ENCODE measurements at regions of chr9 and their contacts with region 1.

Region 1: GRCh38 chr9:131277910-131278701 is 1.8 kb upstream of the FAM78A start:
- DNase-seq: peak; percentile 67
- H3K4me3 Mint-ChIP-seq: peak overlapping the region; percentile 85
- H3K27ac Mint-ChIP-seq: peak overlapping the region; percentile 91
- H3K4me1 Mint-ChIP-seq: peaks cover 19% of the 10 kb centered on the region
- H3K27me3 Mint-ChIP-seq: peaks cover 14% of the 10 kb centered on the region

Region 2: DNA sequence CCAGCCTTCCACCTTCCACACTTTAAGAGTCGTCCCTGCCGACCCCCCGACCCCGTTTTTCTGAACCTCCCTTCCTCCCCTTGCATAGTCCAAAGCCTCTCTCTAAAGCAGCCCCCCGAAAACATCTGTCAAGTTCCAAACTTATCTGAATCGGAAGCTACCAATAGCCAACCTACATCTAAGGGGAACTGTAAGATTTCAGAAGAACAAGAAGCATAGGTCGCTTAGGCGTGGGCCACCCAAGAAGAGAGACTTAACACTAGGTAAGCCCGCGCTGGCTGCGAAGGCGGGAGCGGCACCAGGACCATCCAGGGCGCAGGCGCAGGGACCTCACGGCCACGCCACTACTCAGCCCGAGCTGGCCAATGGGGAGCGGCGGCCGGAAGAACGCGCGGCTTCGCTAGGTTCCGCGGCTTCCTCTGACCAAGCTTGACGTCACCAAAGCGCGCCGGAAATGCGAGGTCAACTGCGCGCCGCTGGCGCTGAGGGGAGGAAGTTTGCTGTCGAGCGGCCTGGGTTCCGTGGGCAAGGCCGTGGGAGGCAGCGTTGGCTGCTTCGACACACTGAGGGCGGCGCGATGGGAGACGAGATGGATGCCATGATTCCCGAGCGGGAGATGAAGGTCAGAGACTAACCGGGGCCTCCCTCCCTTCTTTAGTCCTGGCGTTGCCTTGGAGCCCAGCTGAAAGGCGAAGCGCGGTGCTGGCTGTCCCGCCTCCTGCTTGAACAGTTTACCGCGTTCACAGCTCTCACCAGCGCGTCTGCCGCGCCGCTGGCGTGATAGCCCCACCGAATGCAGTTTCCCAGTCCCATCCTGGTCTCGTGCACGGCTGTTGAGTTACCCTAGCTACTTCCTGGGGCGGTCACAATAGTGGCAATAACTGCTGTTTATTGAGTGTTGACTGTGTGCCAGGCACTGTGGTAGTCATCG is 152.7 kb before region 1 on chr9 and contains the start of gene NUP214:
- intact Hi-C with region 1: loop called (anchors 5 kb)
- DNase-seq: peak; percentile 99
- H3K4me3 Mint-ChIP-seq: peak within 1 kb of the TSS; percentile 98
- H3K27ac Mint-ChIP-seq: peak within 1 kb of the TSS; percentile 94
- H3K4me1 Mint-ChIP-seq: peaks cover 16% of the 10 kb centered on the region
- H3K27me3 Mint-ChIP-seq: no peaks in the 10 kb centered on the region
- total RNA-seq, gene NUP214: 67.4 and 78.1 TPM in 2 replicates

Region 3: DNA sequence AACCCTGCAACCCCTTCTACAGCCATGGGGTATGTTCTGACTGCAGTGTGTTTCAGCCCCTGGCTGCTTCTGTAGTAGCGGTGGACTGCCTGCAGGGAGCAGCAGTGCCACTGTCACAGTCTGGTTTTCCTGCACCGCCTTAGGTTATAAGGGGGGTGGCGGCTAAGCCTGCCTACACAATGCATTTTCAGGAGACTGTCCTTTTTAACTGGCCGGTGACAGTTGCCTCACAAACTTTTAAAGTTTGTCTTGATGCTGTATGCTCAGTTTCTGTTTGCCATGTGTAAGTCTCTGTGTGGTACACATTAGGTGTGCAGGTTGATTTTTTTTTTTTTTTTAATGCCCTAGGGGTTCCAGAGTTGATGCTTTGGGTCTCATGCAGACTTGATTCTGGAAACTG is 99.7 kb before region 1 on chr9:
- intact Hi-C with region 1: loop called (anchors 2 kb)
- DNase-seq: peak; percentile 73
- H3K4me3 Mint-ChIP-seq: no peak overlapping the region
- H3K27ac Mint-ChIP-seq: no peak overlapping the region
- H3K4me1 Mint-ChIP-seq: peaks cover 4% of the 10 kb centered on the region
- H3K27me3 Mint-ChIP-seq: no peaks in the 10 kb centered on the region

Region 4: GRCh38 chr9:131237931-131238401 is 40.1 kb before region 1 on chr9:
- intact Hi-C with region 1: loop called (anchors 1 kb)
- DNase-seq: peak; percentile 82
- H3K4me3 Mint-ChIP-seq: peak overlapping the region; percentile 34
- H3K27ac Mint-ChIP-seq: peak overlapping the region; percentile 93
- H3K4me1 Mint-ChIP-seq: peaks cover 27% of the 10 kb centered on the region
- H3K27me3 Mint-ChIP-seq: no peaks in the 10 kb centered on the region